ENCODE measurements at regions of chr17 and their contacts with region 1.

Region 1: DNA sequence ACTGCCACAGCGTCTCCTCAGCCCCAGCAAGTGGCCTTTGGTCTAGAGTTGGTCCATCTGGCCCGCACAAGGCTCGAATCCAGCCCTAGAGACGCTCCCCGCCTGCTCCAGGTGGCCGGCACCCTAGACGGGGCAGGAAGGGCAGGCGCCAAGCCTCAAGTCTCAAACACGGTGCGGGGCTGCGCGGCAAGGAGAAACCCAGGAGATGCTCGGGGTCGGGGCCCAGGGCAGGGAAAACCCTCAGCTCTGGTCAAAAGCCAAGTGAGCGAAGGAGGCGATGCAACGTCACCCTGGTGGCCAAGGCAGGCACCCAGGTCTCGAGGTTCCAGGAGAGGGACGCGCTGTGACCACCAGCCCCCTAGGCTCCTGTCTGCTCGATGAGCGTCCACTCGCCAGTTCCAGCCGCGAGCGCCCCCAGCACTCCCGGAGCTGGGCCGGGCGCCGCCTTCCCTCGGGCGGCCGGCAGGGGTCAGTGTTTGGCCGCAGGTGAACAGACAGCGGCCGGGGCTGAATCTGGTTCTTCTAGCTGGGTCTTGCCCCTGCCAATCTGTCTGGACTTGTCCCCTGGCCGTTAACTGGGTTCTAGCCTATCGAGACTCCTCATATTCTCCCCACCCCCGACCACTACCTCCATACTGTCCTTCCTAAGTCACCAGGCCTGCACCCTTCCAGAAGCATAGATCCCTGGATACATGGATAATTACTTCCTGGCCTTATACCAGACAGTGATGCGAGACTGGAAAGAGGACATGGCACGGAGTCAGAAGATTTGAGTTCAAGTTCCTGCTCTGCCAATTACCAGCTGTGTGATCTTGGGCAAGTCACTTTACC is 44.0 kb downstream of the PRAC1 start:
- DNase-seq: peak; percentile 51 to 97
- H3K4me3 ChIP-seq: peak overlapping the region; percentile 8 to 55 (median 40); a peak in 7 of 8 replicates
- H3K27ac ChIP-seq: no peak overlapping the region
- H3K4me1 ChIP-seq: peaks cover 0 to 9% (median 2%) of the 10 kb centered on the region in 4 experiments; a peak in 4 of 7 replicates
- H3K27me3 ChIP-seq: peaks cover 5 to 22% (median 19%) of the 10 kb centered on the region in 4 experiments
- CTCF ChIP-seq: peak; percentile 91 to 99 (median 91)
- EP300 ChIP-seq: no peak
- POLR2A ChIP-seq: no peak
- RAD21 ChIP-seq: peak; percentile 95 to 98

Region 2: DNA sequence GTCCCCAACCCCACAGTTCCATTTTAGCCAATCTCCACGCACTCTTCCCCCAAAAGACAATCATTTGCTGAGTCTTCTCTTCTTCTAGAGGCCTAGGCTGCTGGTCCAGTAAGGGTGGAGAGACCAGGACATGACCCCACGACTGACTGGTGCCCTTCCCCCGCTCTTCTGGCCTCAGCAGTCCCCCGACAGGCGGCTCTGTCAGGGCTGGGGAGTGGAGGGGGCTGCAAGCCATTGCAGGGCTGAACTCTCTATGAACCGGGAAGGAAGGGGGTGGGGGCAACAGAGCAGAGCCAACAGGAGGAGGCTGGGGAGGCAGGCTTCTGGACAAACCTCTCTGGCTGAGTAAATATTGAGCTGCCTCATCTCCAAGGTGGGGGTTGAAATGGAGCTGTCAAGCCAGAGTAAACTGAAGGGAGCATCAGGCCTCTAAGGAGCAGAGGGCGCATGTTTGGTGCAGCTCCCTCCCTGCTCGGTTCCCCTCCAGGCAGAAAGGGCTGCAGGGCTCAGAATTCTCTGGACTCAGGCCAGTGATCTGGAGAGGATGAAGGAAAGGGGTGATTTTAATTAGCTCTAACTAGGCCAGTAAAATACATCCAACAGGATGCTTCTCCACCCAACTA is 156.2 kb before region 1 on chr17:
- CTCF ChIA-PET with region 1: no interaction called
- POLR2A ChIA-PET with region 1: no interaction called
- DNase-seq: no peak
- H3K4me3 ChIP-seq: no peak overlapping the region
- H3K27ac ChIP-seq: no peak overlapping the region
- H3K4me1 ChIP-seq: peaks cover 5 to 14% (median 7%) of the 10 kb centered on the region in 4 experiments
- H3K27me3 ChIP-seq: peaks cover 35 to 78% (median 73%) of the 10 kb centered on the region in 4 experiments
- CTCF ChIP-seq: no peak
- EP300 ChIP-seq: no peak
- POLR2A ChIP-seq: no peak
- RAD21 ChIP-seq: no peak

Region 3: DNA sequence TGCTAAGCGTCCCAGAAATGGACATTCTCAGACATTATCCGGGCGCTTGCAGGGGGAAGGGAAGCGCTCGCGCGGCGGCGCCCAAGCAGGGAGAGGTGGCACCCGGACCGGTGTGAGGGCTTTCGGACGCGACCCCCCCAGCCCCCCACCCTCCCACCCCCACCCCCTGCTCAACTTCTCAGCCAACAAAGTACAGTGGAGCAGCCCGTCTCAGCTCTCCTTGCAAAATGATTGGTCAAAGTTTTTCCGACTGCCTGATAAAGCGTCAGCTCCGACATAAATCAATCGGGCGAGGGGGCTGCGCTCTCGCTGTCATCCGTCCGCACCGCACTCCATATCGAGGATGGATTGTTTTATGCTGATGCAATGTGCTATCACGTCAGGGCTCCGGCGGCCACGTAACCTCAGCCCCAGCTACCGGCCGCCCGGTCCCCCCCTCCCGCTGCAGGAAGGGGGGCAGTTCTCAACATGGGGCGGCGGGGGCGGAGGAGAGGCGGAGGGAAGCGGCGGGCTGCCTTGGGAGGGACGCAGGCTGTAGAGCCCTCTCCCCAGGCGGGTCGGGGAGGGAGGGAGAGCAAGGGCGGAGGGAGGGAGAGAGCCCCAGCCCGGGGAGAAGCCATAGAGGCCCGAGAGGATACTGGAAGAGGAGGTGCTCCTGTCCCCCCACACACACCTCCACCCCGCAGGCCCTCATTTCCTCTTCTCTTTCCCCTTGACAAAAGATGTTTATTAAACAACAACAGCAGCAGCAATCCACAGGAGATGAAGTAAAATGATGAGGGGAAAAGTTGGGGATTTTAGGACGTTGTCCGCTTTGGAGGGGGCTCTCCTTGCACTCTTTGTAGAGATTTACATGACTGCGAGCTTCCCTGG is 51.9 kb before region 1 on chr17 and contains the start of gene HOXB9:
- CTCF ChIA-PET with region 1: no interaction called
- POLR2A ChIA-PET with region 1: no interaction called
- DNase-seq: no peak
- H3K4me3 ChIP-seq: peak within 1 kb of the TSS in 3 of 4 experiments; percentile 12 to 52 (median 19); a peak in 6 of 8 replicates
- H3K27ac ChIP-seq: no peak within 1 kb of the TSS
- H3K4me1 ChIP-seq: peaks cover 0 to 11% (median 5%) of the 10 kb centered on the region in 4 experiments; a peak in 5 of 7 replicates
- H3K27me3 ChIP-seq: peaks cover 98 to 100% (median 100%) of the 10 kb centered on the region in 4 experiments
- CTCF ChIP-seq: no peak
- EP300 ChIP-seq: no peak
- POLR2A ChIP-seq: no peak
- RAD21 ChIP-seq: no peak
- total RNA-seq, gene HOXB9: not detected in 2 replicates

Region 4: DNA sequence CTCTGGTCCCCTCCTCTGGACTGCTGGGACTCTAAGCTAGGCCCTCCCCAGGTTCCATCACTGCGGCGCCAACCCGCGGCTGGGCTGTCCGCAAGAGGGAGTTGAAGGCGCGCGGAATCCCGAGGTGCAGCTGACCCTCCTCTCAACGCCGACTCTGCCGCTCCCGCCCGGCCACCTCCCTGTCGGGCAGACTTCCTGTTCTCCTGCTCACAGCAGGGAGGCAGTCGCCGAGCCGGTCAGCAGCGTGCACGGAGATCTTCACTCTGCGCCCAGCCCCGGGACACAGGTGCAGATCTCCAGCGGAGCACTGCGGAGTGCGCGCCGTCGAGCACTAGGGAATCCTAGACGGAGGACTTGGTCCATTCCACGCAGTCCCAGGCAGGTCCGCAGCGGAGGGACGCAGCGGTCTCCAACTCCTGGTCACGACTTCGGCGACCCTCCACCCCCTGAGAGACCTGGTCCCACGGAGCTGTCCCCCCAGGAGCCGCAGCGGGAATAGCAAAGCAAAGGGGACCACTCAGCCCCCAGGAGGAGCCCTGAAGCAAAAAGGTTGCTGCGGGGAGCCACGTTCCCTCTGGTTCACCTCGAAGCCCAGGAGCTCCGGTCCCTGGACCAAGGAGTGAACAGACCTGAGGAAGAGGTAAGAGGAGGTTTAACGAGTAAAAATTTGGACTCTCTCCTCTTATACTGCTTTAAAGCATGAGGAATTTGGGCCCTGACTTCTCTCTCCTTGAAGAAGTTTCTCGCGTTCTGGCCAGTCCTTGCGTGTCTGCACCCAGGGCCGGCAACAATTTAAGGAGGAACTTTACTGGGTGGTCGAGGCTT is 35.7 kb before region 1 on chr17:
- CTCF ChIA-PET with region 1: interaction called, 10 read pairs
- POLR2A ChIA-PET with region 1: interaction called, 4 read pairs
- DNase-seq: peak in 1 of 2 experiments; percentile 79
- H3K4me3 ChIP-seq: no peak overlapping the region
- H3K27ac ChIP-seq: no peak overlapping the region
- H3K4me1 ChIP-seq: peaks cover 0 to 13% (median 9%) of the 10 kb centered on the region in 4 experiments; a peak in 5 of 7 replicates
- H3K27me3 ChIP-seq: peaks cover 98 to 100% (median 100%) of the 10 kb centered on the region in 4 experiments
- CTCF ChIP-seq: peak; percentile 38 to 46 (median 41)
- EP300 ChIP-seq: no peak
- POLR2A ChIP-seq: no peak
- RAD21 ChIP-seq: peak in 1 of 2 experiments; percentile 28; a peak in 2 of 4 replicates

Region 5: DNA sequence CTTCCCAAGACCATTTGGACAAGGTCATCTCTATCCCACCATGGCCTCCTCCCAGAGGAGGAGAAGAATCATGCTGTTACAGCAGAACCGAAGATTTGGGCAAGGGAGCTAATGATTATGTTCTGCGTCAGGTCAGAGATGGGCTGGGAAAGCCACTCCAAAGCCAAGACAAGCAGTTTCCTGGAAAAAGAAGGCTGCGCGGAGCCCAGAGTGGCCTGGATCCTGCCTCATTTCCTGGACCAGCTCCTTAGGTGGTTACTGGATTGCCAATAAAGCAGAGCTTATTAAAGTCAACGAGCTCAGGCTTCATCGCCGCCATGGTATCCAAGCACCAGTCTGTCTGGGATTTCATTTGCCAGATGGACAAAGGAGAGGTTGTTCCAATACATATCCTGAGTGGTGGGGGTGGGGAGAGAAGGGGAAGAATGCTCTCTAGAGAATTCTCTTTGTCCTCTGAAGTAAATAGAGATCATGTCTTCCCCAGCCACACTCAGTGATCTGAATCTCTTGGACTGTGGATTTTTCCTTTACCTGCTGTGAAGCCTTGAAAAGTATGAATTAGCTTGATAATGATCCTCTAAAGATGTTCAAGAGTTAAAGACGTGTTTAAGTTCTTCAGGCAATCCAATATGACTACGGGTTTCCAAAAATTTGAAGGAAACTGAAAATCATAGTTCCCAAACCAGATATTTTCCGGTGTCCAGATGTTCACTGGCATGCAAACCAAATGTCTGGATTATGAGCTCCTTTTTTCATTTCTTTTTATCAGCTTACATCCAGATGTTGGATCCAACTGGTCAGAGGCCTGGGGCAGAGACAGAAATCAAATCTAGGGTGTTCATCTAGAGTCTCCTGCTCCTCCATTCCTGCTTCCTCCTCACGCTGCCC is 26.2 kb after region 1 on chr17:
- CTCF ChIA-PET with region 1: interaction called, 30 read pairs
- POLR2A ChIA-PET with region 1: interaction called, 6 read pairs
- DNase-seq: no peak
- H3K4me3 ChIP-seq: no peak overlapping the region
- H3K27ac ChIP-seq: no peak overlapping the region
- H3K4me1 ChIP-seq: no peaks in the 10 kb centered on the region
- H3K27me3 ChIP-seq: peaks cover 0 to 13% (median 5%) of the 10 kb centered on the region in 4 experiments; a peak in 4 of 7 replicates
- CTCF ChIP-seq: no peak
- EP300 ChIP-seq: no peak
- POLR2A ChIP-seq: no peak
- RAD21 ChIP-seq: no peak

Region 6: DNA sequence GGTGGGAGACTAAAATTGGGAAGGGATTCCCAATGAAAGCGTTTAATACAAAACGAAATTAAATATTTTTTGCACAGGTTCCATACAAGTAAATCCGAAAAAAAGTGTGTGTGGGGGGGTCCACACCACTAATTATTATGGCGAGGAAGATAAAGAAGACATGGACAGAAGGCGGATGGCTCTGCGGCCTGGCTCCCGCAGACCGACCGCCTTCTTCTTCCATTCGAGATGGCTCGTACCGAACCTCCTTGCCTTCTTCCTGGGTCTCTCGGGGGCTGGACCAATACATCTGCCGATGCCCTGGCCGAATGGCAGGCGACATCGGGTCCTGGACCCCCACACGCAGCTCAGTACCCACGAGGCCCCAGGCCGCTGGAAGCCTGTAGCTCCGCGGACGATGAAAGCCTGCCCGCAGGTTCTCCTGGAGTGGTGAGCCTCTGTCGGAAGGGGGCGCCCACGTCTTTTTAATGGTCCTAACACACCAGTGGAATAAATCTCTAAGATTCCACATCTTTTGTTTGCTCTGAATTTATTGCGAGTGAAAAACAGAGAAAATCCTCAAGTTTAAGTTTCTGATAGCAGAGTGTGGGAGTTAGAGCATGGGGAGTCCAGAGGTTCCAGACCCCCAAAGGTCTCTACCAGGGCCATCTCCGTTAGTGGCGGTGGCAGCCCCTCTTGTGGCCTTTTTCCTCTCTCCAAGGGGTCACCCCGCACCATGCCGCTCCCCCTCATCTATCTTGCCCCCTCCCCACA is 46.1 kb after region 1 on chr17:
- CTCF ChIA-PET with region 1: interaction called, 101 read pairs
- POLR2A ChIA-PET with region 1: no interaction called
- DNase-seq: peak in 1 of 2 experiments; percentile 88
- H3K4me3 ChIP-seq: no peak overlapping the region
- H3K27ac ChIP-seq: no peak overlapping the region
- H3K4me1 ChIP-seq: peaks cover 11 to 32% (median 15%) of the 10 kb centered on the region in 4 experiments; a peak in 6 of 7 replicates
- H3K27me3 ChIP-seq: peaks cover 98 to 100% (median 99%) of the 10 kb centered on the region in 4 experiments
- CTCF ChIP-seq: peak; percentile 60 to 70 (median 68)
- EP300 ChIP-seq: no peak
- POLR2A ChIP-seq: no peak
- RAD21 ChIP-seq: peak; percentile 73 to 74

Region 7: DNA sequence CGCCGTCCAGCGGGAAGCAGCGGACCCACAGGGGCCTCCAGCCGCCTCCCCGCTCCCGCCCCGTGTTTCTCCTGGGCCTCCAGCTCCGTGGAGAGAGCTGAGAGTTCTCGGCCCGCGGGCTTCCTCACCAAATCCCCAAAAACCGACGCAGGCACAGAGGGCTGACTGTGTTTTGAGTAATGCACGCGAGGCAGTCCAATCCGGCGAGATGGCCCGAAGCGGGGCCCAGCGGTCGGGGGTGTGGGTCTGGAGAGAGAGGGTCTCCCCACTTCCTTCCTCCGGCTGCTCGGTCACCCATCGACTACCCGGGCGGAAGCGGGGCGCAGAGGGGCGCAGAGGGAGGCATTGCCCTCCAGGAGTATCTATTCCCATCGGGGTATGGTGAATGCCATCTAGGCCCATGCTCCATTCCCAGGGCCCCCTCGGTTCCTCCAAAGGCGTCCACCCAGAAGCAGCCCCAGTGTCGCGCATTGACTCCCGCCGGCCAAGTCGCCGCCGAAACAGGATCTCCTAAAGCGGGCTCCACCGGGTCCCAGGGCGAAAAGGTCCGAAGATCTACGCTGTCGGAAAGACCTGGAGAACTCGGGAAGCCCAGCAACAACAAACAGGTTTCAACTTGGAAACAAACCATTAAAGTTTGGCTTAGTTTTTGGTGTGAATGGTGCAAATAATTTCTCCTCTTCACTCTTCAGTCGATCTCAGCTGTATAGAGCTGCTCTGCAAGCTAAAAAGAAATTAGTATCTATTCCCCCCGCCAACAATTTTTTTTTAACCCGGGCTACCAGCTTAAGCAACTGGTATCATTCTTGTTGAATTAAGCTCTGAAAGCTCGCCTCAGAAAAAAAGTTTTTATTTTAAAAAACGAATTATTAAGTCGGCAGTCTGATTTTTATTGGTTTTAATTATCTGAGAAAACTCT is 69.3 kb after region 1 on chr17:
- CTCF ChIA-PET with region 1: interaction called, 21 read pairs
- POLR2A ChIA-PET with region 1: no interaction called
- DNase-seq: peak in 1 of 2 experiments; percentile 64
- H3K4me3 ChIP-seq: peak overlapping the region in 1 of 4 experiments; percentile 10; a peak in 1 of 8 replicates
- H3K27ac ChIP-seq: no peak overlapping the region
- H3K4me1 ChIP-seq: peaks cover 3 to 7% (median 5%) of the 10 kb centered on the region in 4 experiments
- H3K27me3 ChIP-seq: peaks cover 93 to 100% (median 98%) of the 10 kb centered on the region in 4 experiments
- CTCF ChIP-seq: no peak
- EP300 ChIP-seq: no peak
- POLR2A ChIP-seq: no peak
- RAD21 ChIP-seq: no peak

Region 8: DNA sequence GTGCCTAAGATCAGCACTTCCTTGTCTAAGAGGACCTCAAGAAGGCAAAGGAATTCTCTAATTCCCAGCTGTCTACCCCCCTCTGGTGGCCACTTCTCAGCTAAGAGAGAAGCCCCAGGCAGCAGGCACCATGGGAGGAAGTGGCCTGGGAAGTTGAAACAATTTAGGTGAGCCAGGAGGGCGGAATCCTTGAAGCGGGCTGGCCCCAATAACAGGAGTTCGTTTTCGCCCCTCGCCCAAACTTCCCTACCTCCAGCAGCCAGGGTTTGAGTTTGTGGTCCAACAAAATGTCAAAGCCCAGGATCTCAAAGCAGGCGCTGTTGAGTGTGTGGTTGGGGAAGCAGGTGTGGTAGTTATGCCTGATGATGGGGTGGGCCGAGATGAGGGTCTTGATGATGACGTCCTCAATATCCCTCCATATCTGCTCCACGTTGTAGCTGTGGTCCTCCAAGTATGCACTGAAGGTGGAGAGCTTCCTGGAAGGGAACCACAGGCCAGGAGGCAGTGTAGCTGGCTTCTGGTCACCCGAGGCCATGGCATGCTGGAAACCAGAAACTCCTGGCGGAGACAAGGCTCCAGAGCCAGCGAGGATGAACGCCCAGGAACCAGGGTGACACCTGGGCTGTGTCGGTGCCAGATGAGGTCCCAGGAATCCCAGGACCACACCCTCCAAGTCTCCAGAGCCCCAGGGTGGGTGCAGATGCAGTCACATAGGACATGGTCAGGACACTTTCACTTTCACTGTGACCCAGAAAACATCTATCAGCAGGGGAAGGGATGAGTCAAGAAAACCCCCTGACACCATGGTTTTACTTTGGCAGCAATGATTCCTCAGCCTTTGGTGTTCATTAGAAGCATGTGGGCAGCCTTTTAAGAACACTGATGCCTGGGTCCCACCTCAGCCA is 113.0 kb after region 1 on chr17:
- CTCF ChIA-PET with region 1: interaction called, 159 read pairs
- POLR2A ChIA-PET with region 1: interaction called, 3 read pairs
- DNase-seq: peak; percentile 70 to 85
- H3K4me3 ChIP-seq: no peak overlapping the region
- H3K27ac ChIP-seq: no peak overlapping the region
- H3K4me1 ChIP-seq: peaks cover 0 to 3% (median 0%) of the 10 kb centered on the region in 4 experiments; a peak in 2 of 7 replicates
- H3K27me3 ChIP-seq: peaks cover 0 to 6% (median 1%) of the 10 kb centered on the region in 4 experiments; a peak in 2 of 7 replicates
- CTCF ChIP-seq: peak; percentile 61 to 94 (median 81)
- EP300 ChIP-seq: no peak
- POLR2A ChIP-seq: no peak
- RAD21 ChIP-seq: peak; percentile 84 to 88

Region 9: GRCh38 chr17:48878918-48879898 is 200.9 kb after region 1 on chr17:
- CTCF ChIA-PET with region 1: interaction called, 88 read pairs
- POLR2A ChIA-PET with region 1: no interaction called
- DNase-seq: peak in 1 of 2 experiments; percentile 61
- H3K4me3 ChIP-seq: no peak overlapping the region
- H3K27ac ChIP-seq: no peak overlapping the region
- H3K4me1 ChIP-seq: no peaks in the 10 kb centered on the region
- H3K27me3 ChIP-seq: no peaks in the 10 kb centered on the region; a peak in 1 of 7 replicates
- CTCF ChIP-seq: peak; percentile 59 to 99 (median 91)
- EP300 ChIP-seq: no peak
- POLR2A ChIP-seq: no peak
- RAD21 ChIP-seq: peak; percentile 98 to 99

Measured in H1 (cell line).